Activated CD8-positive, alpha-beta T cell treated with anti-CD3 and anti-CD28 coated beads, Interleukin-2, amount 10 ng/mL, durations not matched to agents 7 days and 5 days (primary cell): ENCODE measurements at regions of chr12 and their contacts with region 1.

Region 1: DNA sequence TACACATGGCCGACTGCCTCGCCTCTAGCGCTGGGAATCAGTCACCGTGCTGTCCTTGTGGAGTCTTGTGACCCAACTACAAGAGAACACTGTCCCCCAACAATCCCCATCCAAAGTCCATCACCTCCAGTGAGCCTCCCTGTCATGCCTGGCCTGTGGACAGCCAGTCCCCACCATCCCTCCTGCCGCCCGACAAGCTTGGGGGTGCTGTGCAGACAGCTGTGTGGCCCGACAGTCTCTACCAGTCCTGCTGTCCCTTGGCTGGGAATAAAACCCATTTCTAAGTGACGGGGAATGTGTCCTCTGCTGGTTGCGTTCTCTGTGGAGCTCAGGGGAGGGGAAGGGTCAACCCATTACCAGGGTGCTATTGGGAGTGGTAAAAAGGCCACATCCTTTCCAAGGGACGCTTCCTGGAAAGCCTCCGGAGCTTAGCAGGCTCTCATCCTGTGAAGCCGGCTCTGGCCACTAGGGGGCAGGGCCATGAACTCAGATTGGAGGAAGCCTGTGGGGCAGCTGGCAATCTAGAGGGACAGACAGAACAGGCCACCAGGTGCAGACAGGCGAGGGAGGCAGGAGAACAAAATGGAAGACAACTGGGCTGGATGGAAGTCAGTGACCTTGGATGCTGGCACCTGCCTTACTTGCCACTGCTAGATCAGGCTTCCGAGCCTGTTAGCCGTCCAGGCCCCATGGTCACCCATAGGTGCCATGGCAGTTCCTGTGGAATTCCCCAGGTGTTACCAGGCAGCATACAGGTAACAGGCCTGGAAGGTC is 12.0 kb upstream of the BLTP3B start:
- DNase-seq: peak; percentile 80
- ATAC-seq: peak; percentile 78
- H3K4me3 Mint-ChIP-seq: no peak overlapping the region
- H3K27ac Mint-ChIP-seq: peak overlapping the region; percentile 59
- H3K4me1 Mint-ChIP-seq: peaks cover 9% of the 10 kb centered on the region
- H3K27me3 Mint-ChIP-seq: no peaks in the 10 kb centered on the region

Region 2: DNA sequence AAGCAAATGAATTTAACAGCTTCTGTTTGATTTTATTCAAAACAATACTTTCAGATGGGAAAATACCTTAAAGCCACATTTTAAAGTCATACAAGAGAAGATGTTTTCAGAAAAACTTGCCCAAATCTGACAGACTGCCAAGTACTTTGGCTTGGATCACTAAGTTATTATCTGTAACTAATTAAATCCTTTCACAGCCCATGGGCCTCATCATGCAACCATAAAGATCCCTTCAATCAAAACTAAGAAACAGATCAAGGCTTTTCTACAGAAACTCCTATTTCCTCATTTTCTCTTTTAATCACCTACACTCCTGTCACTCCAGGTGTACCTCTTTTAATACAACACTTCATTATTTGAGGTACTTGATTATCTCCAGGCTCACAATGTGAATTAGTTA is 40.1 kb before region 1 on chr12:
- CTCF ChIA-PET with region 1: no interaction called
- POLR2A ChIA-PET with region 1: no interaction called
- DNase-seq: no peak
- ATAC-seq: no peak
- H3K4me3 Mint-ChIP-seq: no peak overlapping the region
- H3K27ac Mint-ChIP-seq: no peak overlapping the region
- H3K4me1 Mint-ChIP-seq: no peaks in the 10 kb centered on the region
- H3K27me3 Mint-ChIP-seq: no peaks in the 10 kb centered on the region

Region 3: DNA sequence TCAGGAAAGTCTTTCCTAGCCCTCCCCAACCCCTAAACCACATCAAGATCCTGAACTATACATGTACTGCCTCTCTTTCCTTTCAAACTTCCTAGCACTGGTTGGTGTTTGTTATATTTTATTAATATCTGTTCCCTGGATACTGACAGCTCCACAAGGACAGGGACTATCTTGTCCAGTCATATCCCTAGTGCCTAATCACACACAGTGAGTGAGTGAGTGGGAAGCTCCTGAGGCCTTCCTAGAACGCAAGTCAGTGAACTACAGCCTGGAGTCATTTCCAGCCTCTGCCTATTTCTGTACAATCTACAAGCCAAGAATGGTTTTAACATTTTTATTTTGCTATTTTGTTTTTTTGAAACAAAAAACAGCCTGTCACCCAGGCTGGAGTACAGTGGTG is 38.4 kb after region 1 on chr12:
- CTCF ChIA-PET with region 1: interaction called, 10 read pairs
- POLR2A ChIA-PET with region 1: no interaction called
- DNase-seq: no peak
- ATAC-seq: no peak
- H3K4me3 Mint-ChIP-seq: no peak overlapping the region
- H3K27ac Mint-ChIP-seq: no peak overlapping the region
- H3K4me1 Mint-ChIP-seq: peaks cover 10% of the 10 kb centered on the region
- H3K27me3 Mint-ChIP-seq: no peaks in the 10 kb centered on the region